ENCODE measurements at regions of chr7 and their contacts with region 1.

Region 1: DNA sequence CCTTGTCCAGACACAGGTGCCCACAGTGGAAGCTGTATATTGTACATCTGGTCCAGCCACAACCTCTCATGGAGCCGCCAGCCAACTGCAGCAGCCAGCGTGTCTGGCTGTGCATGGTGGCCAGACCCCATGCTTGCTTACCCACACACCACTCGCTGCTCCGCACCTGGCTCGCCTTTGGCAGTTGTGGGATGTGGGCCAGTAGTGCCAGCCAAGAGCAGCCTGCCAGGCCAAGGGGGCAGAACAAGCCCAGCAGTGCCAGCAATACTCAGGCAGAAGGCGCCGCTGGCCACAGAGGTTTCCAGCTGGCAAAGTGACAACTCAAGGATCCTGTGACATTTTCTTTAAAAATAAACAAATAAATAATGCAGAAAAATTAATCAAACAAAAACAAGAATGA is 11.7 kb upstream of the TMEM243 start:
- DNase-seq: no peak
- H3K4me3 ChIP-seq: no peak overlapping the region
- H3K4me3 Mint-ChIP-seq: no peak overlapping the region
- H3K27ac ChIP-seq: no peak overlapping the region
- H3K27ac Mint-ChIP-seq: no peak overlapping the region
- H3K4me1 ChIP-seq: no peaks in the 10 kb centered on the region
- H3K4me1 Mint-ChIP-seq: peaks cover 2% of the 10 kb centered on the region
- H3K27me3 ChIP-seq: peaks cover 0 to 2% of the 10 kb centered on the region in 2 donors
- H3K27me3 Mint-ChIP-seq: peaks cover 0 to 8% (median 7%) of the 10 kb centered on the region in 3 donors
- CTCF ChIP-seq: no peak

Region 2: GRCh38 chr7:86926732-86927131 is 304.5 kb before region 1 on chr7:
- intact Hi-C with region 1: loop called (anchors 5 to 10 kb)
- DNase-seq: peak in 2 of 3 donors; percentile 30 to 34
- H3K4me3 ChIP-seq: no peak overlapping the region
- H3K4me3 Mint-ChIP-seq: no peak overlapping the region
- H3K27ac ChIP-seq: no peak overlapping the region
- H3K27ac Mint-ChIP-seq: no peak overlapping the region
- H3K4me1 ChIP-seq: peaks cover 6 to 7% of the 10 kb centered on the region in 2 donors
- H3K4me1 Mint-ChIP-seq: peaks cover 17% of the 10 kb centered on the region
- H3K27me3 ChIP-seq: no peaks in the 10 kb centered on the region
- H3K27me3 Mint-ChIP-seq: peaks cover 0 to 2% (median 0%) of the 10 kb centered on the region in 3 donors
- CTCF ChIP-seq: peak; percentile 82

Region 3: GRCh38 chr7:86939197-86939814 is 291.9 kb before region 1 on chr7:
- intact Hi-C with region 1: loop called in 1 of 2 experiments (anchors 10 kb)
- DNase-seq: peak in 2 of 3 donors; percentile 28 to 35
- H3K4me3 ChIP-seq: no peak overlapping the region
- H3K4me3 Mint-ChIP-seq: no peak overlapping the region
- H3K27ac ChIP-seq: no peak overlapping the region
- H3K27ac Mint-ChIP-seq: no peak overlapping the region
- H3K4me1 ChIP-seq: no peaks in the 10 kb centered on the region
- H3K4me1 Mint-ChIP-seq: no peaks in the 10 kb centered on the region
- H3K27me3 ChIP-seq: no peaks in the 10 kb centered on the region
- H3K27me3 Mint-ChIP-seq: peaks cover 0 to 3% (median 0%) of the 10 kb centered on the region in 3 donors
- CTCF ChIP-seq: peak; percentile 71

Region 4: GRCh38 chr7:87287738-87288341 is 56.6 kb after region 1 on chr7:
- intact Hi-C with region 1: no loop called
- DNase-seq: no peak
- H3K4me3 ChIP-seq: no peak overlapping the region
- H3K4me3 Mint-ChIP-seq: no peak overlapping the region
- H3K27ac ChIP-seq: no peak overlapping the region
- H3K27ac Mint-ChIP-seq: no peak overlapping the region
- H3K4me1 ChIP-seq: no peaks in the 10 kb centered on the region
- H3K4me1 Mint-ChIP-seq: no peaks in the 10 kb centered on the region
- H3K27me3 ChIP-seq: no peaks in the 10 kb centered on the region
- H3K27me3 Mint-ChIP-seq: peaks cover 0 to 2% (median 2%) of the 10 kb centered on the region in 3 donors
- CTCF ChIP-seq: no peak

Region 5: GRCh38 chr7:87398446-87398845 is 167.2 kb after region 1 on chr7:
- intact Hi-C with region 1: no loop called
- DNase-seq: no peak
- H3K4me3 ChIP-seq: no peak overlapping the region
- H3K4me3 Mint-ChIP-seq: no peak overlapping the region
- H3K27ac ChIP-seq: no peak overlapping the region
- H3K27ac Mint-ChIP-seq: no peak overlapping the region
- H3K4me1 ChIP-seq: no peaks in the 10 kb centered on the region
- H3K4me1 Mint-ChIP-seq: no peaks in the 10 kb centered on the region
- H3K27me3 ChIP-seq: no peaks in the 10 kb centered on the region
- H3K27me3 Mint-ChIP-seq: no peaks in the 10 kb centered on the region
- CTCF ChIP-seq: no peak